Head of caudate nucleus (tissue), 42 donors: ENCODE measurements at regions of chr9 and their contacts with region 1.

Region 1: GRCh38 chr9:84922051-84922450 is 252.5 kb downstream of the NTRK2 start:
- DNase-seq: peak in 33 of 42 donors; percentile 15 to 81 (median 44)

Region 2: GRCh38 chr9:84748112-84748511 is 173.9 kb before region 1 on chr9:
- intact Hi-C with region 1: no loop called
- DNase-seq: no peak

Region 3: DNA sequence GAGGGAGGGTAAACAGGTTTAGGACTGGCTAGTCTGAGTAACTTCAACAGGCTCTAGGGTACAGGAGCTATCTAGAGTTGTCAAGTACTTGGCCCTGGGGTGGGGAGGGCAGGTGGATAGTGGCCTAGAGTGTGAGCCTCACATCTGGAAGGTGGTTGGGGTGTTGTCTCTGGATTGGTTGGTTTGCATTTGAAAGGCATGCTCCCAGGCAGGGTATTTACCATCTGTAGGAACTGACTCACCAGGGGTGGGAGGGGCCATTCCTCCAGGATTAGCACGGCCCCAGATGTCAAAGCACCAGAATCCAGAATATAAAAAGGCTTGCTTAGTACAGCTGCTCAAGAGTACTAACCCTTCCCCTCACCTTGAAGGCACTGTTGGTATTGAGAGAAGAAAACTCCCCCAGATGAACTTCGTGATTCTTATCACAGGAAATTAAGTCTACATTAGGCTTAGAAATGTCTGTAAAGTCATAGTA is 59.2 kb before region 1 on chr9:
- intact Hi-C with region 1: loop called (anchors 10 kb)
- DNase-seq: peak in 9 of 42 donors; percentile 6 to 67 (median 32)

Region 4: DNA sequence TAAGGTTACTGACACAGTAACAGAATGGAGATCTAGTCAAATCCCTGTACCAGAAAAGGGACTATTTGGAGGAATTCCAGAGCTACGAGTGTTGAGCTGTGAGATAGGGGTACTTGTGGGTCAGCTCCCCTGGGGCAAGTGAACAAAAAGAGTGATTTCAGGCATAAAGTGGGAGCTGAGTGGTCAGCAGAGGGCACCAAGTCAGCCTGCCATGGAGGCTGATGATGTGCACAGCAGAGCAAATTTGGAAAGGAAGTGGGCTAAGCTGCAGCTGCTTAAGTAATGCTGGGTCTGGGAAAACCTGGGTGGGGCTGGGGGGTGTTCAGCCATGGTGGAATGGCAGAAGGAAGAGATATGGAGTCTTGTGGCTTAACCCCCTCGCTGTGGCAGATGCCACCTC is 75.4 kb after region 1 on chr9:
- intact Hi-C with region 1: no loop called
- DNase-seq: peak in 14 of 42 donors; percentile 4 to 73 (median 43)

Region 5: DNA sequence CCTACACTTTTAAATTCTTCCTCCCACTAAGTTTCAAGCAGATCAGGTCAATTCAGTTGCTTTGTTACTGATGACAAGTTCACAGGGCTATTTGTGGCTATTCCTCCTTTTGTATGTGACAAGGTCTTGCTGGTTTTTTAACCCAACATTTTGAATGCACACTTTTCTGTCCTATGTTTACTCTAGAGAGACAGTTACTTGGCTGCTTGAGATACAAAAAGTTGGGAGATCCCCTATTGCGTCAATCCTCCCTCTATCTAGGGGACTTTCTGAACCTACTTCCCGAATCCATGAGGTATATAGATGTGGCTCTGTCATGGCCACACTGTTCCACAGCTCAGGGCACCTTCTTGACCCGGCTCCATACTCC is 134.1 kb after region 1 on chr9:
- intact Hi-C with region 1: no loop called
- DNase-seq: no peak